CD8-positive, alpha-beta T cell (primary cell): ENCODE measurements at regions of chr6 and their contacts with region 1.

Region 1: GRCh38 chr6:88513920-88514319 is 347.8 kb upstream of the CNR1 start:
- DNase-seq: no peak
- ATAC-seq: no peak
- H3K4me3 ChIP-seq: no peak overlapping the region
- H3K4me3 Mint-ChIP-seq: no peak overlapping the region
- H3K27ac ChIP-seq: no peak overlapping the region
- H3K27ac Mint-ChIP-seq: no peak overlapping the region
- H3K4me1 ChIP-seq: no peaks in the 10 kb centered on the region
- H3K4me1 Mint-ChIP-seq: no peaks in the 10 kb centered on the region
- H3K27me3 ChIP-seq: no peaks in the 10 kb centered on the region
- H3K27me3 Mint-ChIP-seq: no peaks in the 10 kb centered on the region
- CTCF ChIP-seq: no peak

Region 2: GRCh38 chr6:88477413-88477812 is 36.5 kb before region 1 on chr6:
- CTCF ChIA-PET with region 1: no interaction called
- POLR2A ChIA-PET with region 1: no interaction called
- intact Hi-C with region 1: no loop called
- DNase-seq: no peak
- ATAC-seq: no peak
- H3K4me3 ChIP-seq: no peak overlapping the region
- H3K4me3 Mint-ChIP-seq: no peak overlapping the region
- H3K27ac ChIP-seq: no peak overlapping the region
- H3K27ac Mint-ChIP-seq: no peak overlapping the region
- H3K4me1 ChIP-seq: no peaks in the 10 kb centered on the region
- H3K4me1 Mint-ChIP-seq: no peaks in the 10 kb centered on the region
- H3K27me3 ChIP-seq: no peaks in the 10 kb centered on the region
- H3K27me3 Mint-ChIP-seq: peaks cover 9% of the 10 kb centered on the region
- CTCF ChIP-seq: no peak

Region 3: GRCh38 chr6:88565409-88565811 is 51.5 kb after region 1 on chr6:
- CTCF ChIA-PET with region 1: no interaction called
- POLR2A ChIA-PET with region 1: no interaction called
- intact Hi-C with region 1: loop called in 1 of 2 experiments (anchors 2 kb)
- DNase-seq: no peak
- ATAC-seq: no peak
- H3K4me3 ChIP-seq: no peak overlapping the region
- H3K4me3 Mint-ChIP-seq: no peak overlapping the region
- H3K27ac ChIP-seq: no peak overlapping the region
- H3K27ac Mint-ChIP-seq: no peak overlapping the region
- H3K4me1 ChIP-seq: no peaks in the 10 kb centered on the region
- H3K4me1 Mint-ChIP-seq: no peaks in the 10 kb centered on the region
- H3K27me3 ChIP-seq: no peaks in the 10 kb centered on the region
- H3K27me3 Mint-ChIP-seq: peaks cover 3% of the 10 kb centered on the region
- CTCF ChIP-seq: no peak